ENCODE measurements at regions of chr3 and their contacts with region 1.

Region 1: GRCh38 chr3:136042608-136043221 is 77.2 kb downstream of the PPP2R3A start:
- DNase-seq: no peak
- ATAC-seq: peak; percentile 49

Region 2: DNA sequence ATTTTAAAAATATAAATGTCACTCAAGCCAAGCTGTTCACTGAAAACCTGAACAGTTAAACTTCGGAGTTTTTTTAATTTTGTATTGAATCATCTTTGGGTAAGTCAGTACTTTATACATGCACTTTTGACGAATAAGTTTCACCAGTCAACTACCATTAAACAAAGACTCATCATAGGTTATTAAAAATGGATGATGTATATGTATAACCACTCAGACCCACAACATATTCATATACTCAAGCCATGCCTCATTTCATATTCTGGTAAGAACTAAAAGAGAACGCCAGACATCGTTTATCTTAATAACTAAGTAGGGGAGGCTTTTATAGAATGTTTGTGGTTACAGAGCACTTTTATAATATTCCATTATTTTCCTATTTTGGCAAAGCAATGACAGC is 135.2 kb after region 1 on chr3:
- intact Hi-C with region 1: no loop called
- DNase-seq: no peak
- ATAC-seq: no peak

Region 3: DNA sequence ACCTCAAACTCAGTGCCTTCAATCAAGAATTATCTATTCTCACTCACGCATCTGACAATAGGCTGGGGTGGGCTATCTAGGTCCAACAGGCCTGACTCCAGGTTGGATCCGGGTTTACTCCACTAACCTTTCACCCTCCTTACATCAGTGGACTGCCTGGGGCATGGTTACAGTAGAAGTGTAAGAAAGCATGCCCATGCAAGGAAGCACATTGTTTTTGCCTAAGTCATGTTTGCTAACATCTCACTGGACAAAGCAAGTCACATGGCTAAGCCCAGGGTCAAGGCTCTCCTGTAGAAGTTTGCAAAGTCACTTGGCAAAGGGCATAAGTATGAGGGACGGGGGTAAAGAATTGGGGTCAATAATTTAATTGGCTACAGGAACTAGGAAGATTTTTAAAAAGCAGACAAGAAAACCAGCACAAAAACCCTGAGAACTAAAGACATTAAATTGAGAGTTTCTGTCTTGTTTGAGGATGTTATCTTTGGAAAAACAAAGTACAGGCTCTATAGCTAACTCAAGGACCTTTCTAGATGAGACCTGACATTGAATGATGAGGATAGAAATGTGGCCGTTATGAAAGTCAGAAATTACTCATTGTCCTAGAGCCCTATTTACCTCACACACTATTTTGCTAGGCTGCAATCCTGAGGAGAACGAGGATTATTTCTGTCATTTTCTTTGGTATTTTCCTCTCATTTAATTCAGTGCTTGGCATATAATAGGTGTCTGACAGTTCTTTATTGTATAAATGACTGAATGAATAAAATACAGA is 1129.3 kb after region 1 on chr3:
- intact Hi-C with region 1: no loop called
- DNase-seq: no peak
- ATAC-seq: no peak

Region 4: GRCh38 chr3:137724240-137724639 is 1681.5 kb after region 1 on chr3:
- intact Hi-C with region 1: loop called (anchors 10 kb)
- DNase-seq: no peak
- ATAC-seq: no peak

Measured in sciatic nerve (tissue), 2 donors.